GM12878 (cell line): ENCODE measurements at regions of chr9 and their contacts with region 1.

Region 1: DNA sequence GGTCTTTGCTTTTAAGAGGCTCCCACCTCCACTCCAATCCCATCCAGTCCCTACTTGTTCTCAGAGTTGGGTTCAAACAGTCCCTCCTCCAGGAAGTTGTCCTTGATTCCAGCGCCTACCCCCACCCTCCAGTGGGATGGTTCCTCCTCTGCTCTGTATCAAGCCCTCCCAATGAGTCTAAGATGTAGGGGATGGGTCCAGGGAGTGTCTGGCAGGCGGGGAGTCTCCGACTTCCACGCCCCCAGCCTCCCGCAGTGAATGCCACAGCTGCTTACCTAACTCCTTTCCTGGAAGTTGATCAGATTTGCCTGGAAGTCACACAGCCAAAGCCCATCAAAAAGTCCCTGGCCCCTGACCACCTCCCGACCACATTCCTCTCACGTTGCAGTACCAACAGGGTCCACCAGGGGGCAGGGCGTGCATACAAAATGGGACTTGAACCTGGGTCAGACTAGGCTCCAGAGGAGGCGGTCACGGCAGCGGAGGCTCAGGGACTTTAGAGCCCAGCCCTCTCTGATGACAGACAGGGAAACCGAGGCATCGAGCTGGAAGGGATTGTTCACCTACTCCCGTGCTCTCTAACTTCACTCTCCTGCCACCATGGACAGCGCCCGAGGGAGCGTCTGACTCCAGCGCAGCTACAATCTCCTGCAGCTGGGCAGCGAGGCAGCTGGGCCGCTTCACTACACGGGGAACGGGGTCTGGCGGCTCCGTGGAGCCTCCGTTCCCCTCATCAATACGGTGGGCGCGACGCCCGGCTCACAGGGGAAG is 25.0 kb upstream of the TDRD7 start:
- DNase-seq: no peak
- ATAC-seq: peak; percentile 44
- H3K4me3 ChIP-seq: no peak overlapping the region
- H3K27ac ChIP-seq: no peak overlapping the region
- H3K4me1 ChIP-seq: peaks cover 43% of the 10 kb centered on the region
- H3K27me3 ChIP-seq: no peaks in the 10 kb centered on the region
- CTCF ChIP-seq: peak; percentile 95 to 100 (median 98)
- EP300 ChIP-seq: no peak
- POLR2A ChIP-seq: no peak
- RAD21 ChIP-seq: peak; percentile 91

Region 2: GRCh38 chr9:96854073-96854876 is 532.6 kb before region 1 on chr9 and contains the start of gene ZNF782:
- CTCF ChIA-PET with region 1: interaction called, 11 read pairs
- POLR2A ChIA-PET with region 1: no interaction called
- RAD21 ChIA-PET with region 1: interaction called, 15 read pairs
- SMC1A ChIA-PET with region 1: interaction called, 7 read pairs
- in situ Hi-C with region 1: no loop called
- intact Hi-C with region 1: no loop called
- DNase-seq: peak; percentile 60
- ATAC-seq: peak; percentile 96
- H3K4me3 ChIP-seq: peak within 1 kb of the TSS; percentile 83
- H3K27ac ChIP-seq: peak within 1 kb of the TSS; percentile 45
- H3K4me1 ChIP-seq: 0 out of 2 replicates have a peak, but pooled peaks cover 7% of the 10 kb centered on the region
- H3K27me3 ChIP-seq: no peaks in the 10 kb centered on the region
- CTCF ChIP-seq: no peak
- EP300 ChIP-seq: no peak
- POLR2A ChIP-seq: peak; percentile 58; the same call in 1 of the 2 replicates
- RAD21 ChIP-seq: no peak
- polyA plus RNA-seq, gene ZNF782: 0.55 to 0.82 TPM

Region 3: GRCh38 chr9:97271292-97271691 is 115.6 kb before region 1 on chr9:
- CTCF ChIA-PET with region 1: no interaction called
- POLR2A ChIA-PET with region 1: no interaction called
- RAD21 ChIA-PET with region 1: no interaction called
- SMC1A ChIA-PET with region 1: no interaction called
- in situ Hi-C with region 1: no loop called
- intact Hi-C with region 1: no loop called
- DNase-seq: no peak
- ATAC-seq: no peak
- H3K4me3 ChIP-seq: no peak overlapping the region
- H3K27ac ChIP-seq: no peak overlapping the region
- H3K4me1 ChIP-seq: no peaks in the 10 kb centered on the region
- H3K27me3 ChIP-seq: no peaks in the 10 kb centered on the region
- CTCF ChIP-seq: no peak
- EP300 ChIP-seq: no peak
- POLR2A ChIP-seq: no peak
- RAD21 ChIP-seq: no peak

Region 4: GRCh38 chr9:97367729-97368128 is 19.2 kb before region 1 on chr9:
- CTCF ChIA-PET with region 1: interaction called, 40 read pairs
- POLR2A ChIA-PET with region 1: no interaction called
- RAD21 ChIA-PET with region 1: interaction called, 25 read pairs
- SMC1A ChIA-PET with region 1: interaction called, 29 read pairs
- in situ Hi-C with region 1: no loop called
- intact Hi-C with region 1: no loop called
- DNase-seq: peak; percentile 53
- ATAC-seq: peak; percentile 82
- H3K4me3 ChIP-seq: peak overlapping the region; percentile 11; the same call in 1 of the 2 replicates
- H3K27ac ChIP-seq: no peak overlapping the region
- H3K4me1 ChIP-seq: peaks cover 48% of the 10 kb centered on the region
- H3K27me3 ChIP-seq: no peaks in the 10 kb centered on the region
- CTCF ChIP-seq: no peak
- EP300 ChIP-seq: peak in 1 of 2 experiments; percentile 75; a peak in 1 of 4 replicates
- POLR2A ChIP-seq: no peak
- RAD21 ChIP-seq: no peak

Region 5: GRCh38 chr9:97398999-97399758 is 12.3 kb after region 1 on chr9:
- CTCF ChIA-PET with region 1: interaction called, 157 read pairs
- POLR2A ChIA-PET with region 1: interaction called, 6 read pairs
- RAD21 ChIA-PET with region 1: interaction called, 26 read pairs
- SMC1A ChIA-PET with region 1: interaction called, 66 read pairs
- in situ Hi-C with region 1: no loop called
- intact Hi-C with region 1: loop called (anchors 1 kb)
- DNase-seq: no peak
- ATAC-seq: peak; percentile 81
- H3K4me3 ChIP-seq: no peak overlapping the region
- H3K27ac ChIP-seq: no peak overlapping the region
- H3K4me1 ChIP-seq: peaks cover 6% of the 10 kb centered on the region
- H3K27me3 ChIP-seq: no peaks in the 10 kb centered on the region
- CTCF ChIP-seq: peak; percentile 86 to 100 (median 99)
- EP300 ChIP-seq: no peak
- POLR2A ChIP-seq: no peak
- RAD21 ChIP-seq: peak; percentile 82

Region 6: DNA sequence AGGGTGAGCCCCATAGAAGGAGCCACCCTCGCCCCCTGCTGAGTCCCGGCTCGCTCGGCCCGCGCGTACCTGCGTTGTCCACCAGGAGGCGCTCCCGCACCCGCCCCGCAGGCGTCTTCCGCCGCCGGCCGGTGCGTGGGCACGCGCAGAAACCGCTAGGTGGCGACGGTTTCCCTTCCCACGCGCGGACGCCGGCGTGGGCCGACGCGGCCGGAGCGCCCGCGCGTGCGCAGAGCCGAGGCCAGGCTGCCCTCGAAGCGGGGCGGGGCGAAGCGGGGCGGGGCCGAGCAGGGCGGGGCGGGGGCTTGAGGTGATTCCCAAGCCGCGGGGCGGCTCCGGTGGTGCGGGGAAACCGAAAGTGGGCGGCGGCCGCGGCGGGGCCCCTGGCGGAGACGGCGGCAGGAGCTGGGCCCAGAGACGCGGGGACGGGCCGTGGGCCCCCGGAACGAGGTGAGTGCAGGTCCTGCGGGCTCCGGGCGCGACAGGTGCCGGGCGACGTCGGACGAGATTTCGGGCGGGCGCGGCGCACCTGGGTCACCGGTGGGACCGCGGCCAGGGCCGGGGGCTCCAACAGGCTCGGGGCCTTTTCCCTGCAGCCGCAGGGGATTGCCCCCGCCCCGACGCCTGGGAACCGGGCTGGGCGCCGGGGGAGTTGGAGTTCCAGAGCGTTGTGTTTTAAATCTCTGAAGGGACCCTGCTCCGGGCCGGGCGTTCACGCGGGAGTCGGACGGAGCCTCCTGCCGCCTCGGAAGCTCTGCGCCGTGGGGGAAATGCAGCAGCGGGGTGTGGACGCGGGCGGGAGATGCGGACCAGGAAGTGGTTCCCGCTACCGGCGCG is 25.1 kb after region 1 on chr9 and contains the start of gene TDRD7:
- CTCF ChIA-PET with region 1: interaction called, 157 read pairs
- POLR2A ChIA-PET with region 1: interaction called, 5 read pairs
- RAD21 ChIA-PET with region 1: interaction called, 26 read pairs
- SMC1A ChIA-PET with region 1: interaction called, 14 read pairs
- in situ Hi-C with region 1: no loop called
- intact Hi-C with region 1: no loop called
- DNase-seq: peak; percentile 50
- ATAC-seq: peak; percentile 85
- H3K4me3 ChIP-seq: peak within 1 kb of the TSS; percentile 86
- H3K27ac ChIP-seq: peak within 1 kb of the TSS; percentile 23
- H3K4me1 ChIP-seq: peaks cover 3% of the 10 kb centered on the region; the same call in 1 of the 2 replicates
- H3K27me3 ChIP-seq: no peaks in the 10 kb centered on the region; a peak in 1 of 4 replicates
- CTCF ChIP-seq: peak; percentile 96 to 100 (median 99); a peak in 5 of 6 replicates
- EP300 ChIP-seq: peak; percentile 16 to 49; a peak in 1 of 4 replicates
- POLR2A ChIP-seq: peak; percentile 69
- RAD21 ChIP-seq: peak; percentile 71
- polyA plus RNA-seq, gene TDRD7: 5.7 to 8.3 TPM